ENCODE measurements at regions of chr7 and their contacts with region 1.

Region 1: DNA sequence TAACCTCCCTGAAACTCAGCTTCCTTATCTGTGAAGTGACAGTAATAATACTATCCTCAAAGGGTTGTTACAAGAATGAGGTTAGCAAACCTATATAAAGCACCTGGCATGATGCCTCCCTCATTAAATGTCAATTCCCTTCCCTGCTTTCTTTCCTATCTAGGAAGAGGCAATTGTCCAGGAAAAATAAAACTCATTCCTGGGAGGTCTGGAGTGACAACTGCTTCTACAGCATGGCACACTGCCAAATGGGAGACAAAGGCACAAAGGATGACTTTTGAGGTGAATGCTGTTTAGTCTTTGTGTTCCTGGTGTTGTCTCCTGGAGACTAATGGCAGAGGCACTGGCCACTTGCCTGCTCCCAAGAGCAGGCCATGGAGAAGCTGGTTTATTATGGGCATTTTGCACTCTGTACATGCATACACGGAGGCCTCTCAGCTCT is 32.2 kb upstream of the PDE1C start:
- DNase-seq: peak; percentile 26 to 66
- ATAC-seq: peak; percentile 46 to 96 (median 91)
- H3K4me3 ChIP-seq: no peak overlapping the region
- H3K27ac ChIP-seq: peak overlapping the region in 9 of 10 donors; percentile 31 to 81 (median 64)
- H3K4me1 ChIP-seq: peaks cover 0 to 35% (median 12%) of the 10 kb centered on the region in 9 donors
- H3K27me3 ChIP-seq: no peaks in the 10 kb centered on the region
- CTCF ChIP-seq: no peak

Region 2: GRCh38 chr7:32147546-32148268 is 45.3 kb after region 1 on chr7:
- intact Hi-C with region 1: loop called in 5 of 10 experiments (anchors 2 to 10 kb)
- DNase-seq: no peak
- ATAC-seq: no peak
- H3K4me3 ChIP-seq: no peak overlapping the region
- H3K27ac ChIP-seq: peak overlapping the region in 1 of 10 donors; percentile 63
- H3K4me1 ChIP-seq: peaks cover 0 to 41% (median 11%) of the 10 kb centered on the region in 9 donors
- H3K27me3 ChIP-seq: no peaks in the 10 kb centered on the region
- CTCF ChIP-seq: no peak

Region 3: GRCh38 chr7:32154797-32155196 is 52.3 kb after region 1 on chr7:
- intact Hi-C with region 1: loop called in 6 of 10 experiments (anchors 2 to 10 kb)
- DNase-seq: peak; percentile 67 to 76
- ATAC-seq: peak; percentile 56 to 89 (median 84)
- H3K4me3 ChIP-seq: no peak overlapping the region
- H3K27ac ChIP-seq: peak overlapping the region in 9 of 10 donors; percentile 11 to 87 (median 81)
- H3K4me1 ChIP-seq: peaks cover 0 to 76% (median 40%) of the 10 kb centered on the region in 9 donors
- H3K27me3 ChIP-seq: no peaks in the 10 kb centered on the region
- CTCF ChIP-seq: no peak

Measured in heart right ventricle (tissue), 16 donors.